Caco-2 (cell line): ENCODE measurements at regions of chr3 and their contacts with region 1.

Region 1: GRCh38 chr3:42831321-42831713 is 22.1 kb downstream of the ACKR2 start:
- DNase-seq: peak; percentile 64 to 75
- H3K4me3 ChIP-seq: no peak overlapping the region
- H3K4me3 Mint-ChIP-seq: no peak overlapping the region
- H3K27ac Mint-ChIP-seq: no peak overlapping the region
- H3K4me1 ChIP-seq: peaks cover 36% of the 10 kb centered on the region
- H3K4me1 Mint-ChIP-seq: peaks cover 25% of the 10 kb centered on the region
- H3K27me3 ChIP-seq: no peaks in the 10 kb centered on the region
- H3K27me3 Mint-ChIP-seq: no peaks in the 10 kb centered on the region
- CTCF ChIP-seq: peak; percentile 73 to 76

Region 2: GRCh38 chr3:42336103-42336502 is 495.2 kb before region 1 on chr3:
- CTCF ChIA-PET with region 1: no interaction called
- POLR2A ChIA-PET with region 1: no interaction called
- intact Hi-C with region 1: no loop called
- DNase-seq: no peak
- H3K4me3 ChIP-seq: no peak overlapping the region
- H3K4me3 Mint-ChIP-seq: no peak overlapping the region
- H3K27ac Mint-ChIP-seq: no peak overlapping the region
- H3K4me1 ChIP-seq: no peaks in the 10 kb centered on the region
- H3K4me1 Mint-ChIP-seq: peaks cover 5% of the 10 kb centered on the region
- H3K27me3 ChIP-seq: no peaks in the 10 kb centered on the region
- H3K27me3 Mint-ChIP-seq: peaks cover under 1% of the 10 kb centered on the region
- CTCF ChIP-seq: no peak

Region 3: GRCh38 chr3:42814914-42815507 is 16.3 kb before region 1 on chr3:
- CTCF ChIA-PET with region 1: no interaction called
- POLR2A ChIA-PET with region 1: no interaction called
- intact Hi-C with region 1: loop called (anchors 1 kb)
- DNase-seq: no peak
- H3K4me3 ChIP-seq: no peak overlapping the region
- H3K4me3 Mint-ChIP-seq: no peak overlapping the region
- H3K27ac Mint-ChIP-seq: no peak overlapping the region
- H3K4me1 ChIP-seq: peaks cover 37% of the 10 kb centered on the region
- H3K4me1 Mint-ChIP-seq: peaks cover 27% of the 10 kb centered on the region
- H3K27me3 ChIP-seq: no peaks in the 10 kb centered on the region
- H3K27me3 Mint-ChIP-seq: no peaks in the 10 kb centered on the region
- CTCF ChIP-seq: no peak